Endothelial cell of umbilical vein (primary cell): ENCODE measurements at regions of chr5 and their contacts with region 1.

Region 1: GRCh38 chr5:138575194-138576015 is at the start of gene HSPA9:
- DNase-seq: peak; percentile 100
- H3K4me3 ChIP-seq: peak within 1 kb of the TSS; percentile 89 to 100 (median 100)
- H3K27ac ChIP-seq: peak within 1 kb of the TSS; percentile 97
- H3K4me1 ChIP-seq: peaks cover 10% of the 10 kb centered on the region
- H3K27me3 ChIP-seq: no peaks in the 10 kb centered on the region
- CTCF ChIP-seq: no peak
- POLR2A ChIP-seq: peak; percentile 76
- total RNA-seq, gene HSPA9: 180 and 192 TPM in 2 replicates

Region 2: DNA sequence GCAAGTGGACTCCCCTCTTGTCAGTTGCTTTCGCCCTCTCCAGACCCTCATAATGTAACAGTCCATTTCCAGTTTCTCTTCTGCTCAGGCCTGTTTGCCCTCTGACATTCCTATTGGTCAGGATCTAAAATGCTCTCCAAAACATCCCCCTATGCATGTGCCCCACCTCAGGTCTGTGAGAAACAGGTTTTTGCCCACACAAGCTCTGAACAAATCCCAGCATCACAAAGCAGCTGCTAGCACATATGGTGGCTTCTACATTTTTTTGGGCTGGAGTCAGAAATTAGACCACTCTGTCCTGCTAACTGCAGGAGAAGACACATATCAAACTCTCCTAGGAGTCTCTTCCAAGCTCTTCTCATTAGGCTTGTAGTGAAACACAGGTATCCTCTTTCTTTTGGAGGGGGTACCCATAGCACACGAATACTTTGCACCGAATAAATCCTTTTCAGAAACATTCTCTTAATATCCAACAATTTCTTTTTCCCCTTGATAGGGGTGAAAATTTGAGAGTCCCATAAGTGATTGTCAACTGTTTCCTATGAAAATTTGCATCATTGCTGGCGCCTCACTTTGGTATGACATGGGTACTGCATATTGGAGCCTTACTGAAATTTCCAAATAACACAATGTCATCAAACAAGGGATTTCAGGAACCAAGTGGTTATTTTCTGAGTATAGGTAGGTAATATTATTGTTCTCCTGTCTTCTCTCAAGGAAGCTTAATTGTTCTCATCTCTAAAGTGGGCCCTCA is 19.1 kb after region 1 on chr5:
- CTCF ChIA-PET with region 1: interaction called, 19 read pairs
- POLR2A ChIA-PET with region 1: interaction called, 4 read pairs
- dilution Hi-C with region 1: no loop called
- intact Hi-C with region 1: no loop called
- DNase-seq: no peak
- H3K4me3 ChIP-seq: no peak overlapping the region
- H3K27ac ChIP-seq: no peak overlapping the region
- H3K4me1 ChIP-seq: no peaks in the 10 kb centered on the region
- H3K27me3 ChIP-seq: peaks cover 9 to 11% of the 10 kb centered on the region in 2 experiments
- CTCF ChIP-seq: peak; percentile 9 to 22
- POLR2A ChIP-seq: no peak

Region 3: DNA sequence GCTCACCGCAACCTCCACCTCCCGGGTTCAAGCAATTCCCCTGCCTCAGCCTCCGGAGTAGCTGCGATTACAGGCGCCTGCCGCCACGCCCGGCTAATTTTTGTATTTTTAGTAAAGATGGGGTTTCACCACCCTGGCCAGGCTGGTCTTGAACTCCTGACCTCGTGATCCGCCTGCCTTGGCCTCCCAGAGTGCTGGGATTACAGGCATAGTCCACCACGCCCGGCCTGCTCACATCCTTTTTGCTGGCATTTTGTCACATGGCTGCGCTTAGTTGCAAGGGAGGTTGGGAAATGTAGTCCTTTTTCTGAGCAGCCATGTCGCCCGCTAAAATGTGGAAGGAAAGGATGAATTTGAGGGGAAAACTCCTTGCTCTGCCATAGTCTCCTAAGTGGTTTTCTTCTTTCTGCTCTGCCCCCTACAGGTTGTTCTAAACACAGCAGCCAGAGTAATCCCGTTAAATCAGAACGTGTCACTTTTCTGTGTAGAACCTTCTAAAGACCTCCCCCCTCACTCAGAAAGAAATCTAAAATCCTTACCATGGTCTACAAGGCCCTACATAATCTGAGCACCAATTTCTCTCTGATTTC is 57.6 kb after region 1 on chr5:
- CTCF ChIA-PET with region 1: interaction called, 17 read pairs
- POLR2A ChIA-PET with region 1: no interaction called
- dilution Hi-C with region 1: no loop called
- intact Hi-C with region 1: loop called (anchors 1 kb)
- DNase-seq: peak; percentile 92
- H3K4me3 ChIP-seq: no peak overlapping the region
- H3K27ac ChIP-seq: no peak overlapping the region
- H3K4me1 ChIP-seq: no peaks in the 10 kb centered on the region
- H3K27me3 ChIP-seq: peaks cover 0 to 3% of the 10 kb centered on the region in 2 experiments
- CTCF ChIP-seq: peak; percentile 52 to 59
- POLR2A ChIP-seq: no peak

Region 4: GRCh38 chr5:138676556-138677193 is 101.3 kb after region 1 on chr5:
- CTCF ChIA-PET with region 1: no interaction called
- POLR2A ChIA-PET with region 1: no interaction called
- dilution Hi-C with region 1: no loop called
- intact Hi-C with region 1: no loop called
- DNase-seq: no peak
- H3K4me3 ChIP-seq: no peak overlapping the region
- H3K27ac ChIP-seq: no peak overlapping the region
- H3K4me1 ChIP-seq: no peaks in the 10 kb centered on the region
- H3K27me3 ChIP-seq: peaks cover 0 to 1% of the 10 kb centered on the region in 2 experiments
- CTCF ChIP-seq: no peak
- POLR2A ChIP-seq: no peak

Region 5: GRCh38 chr5:138725138-138725833 is 149.9 kb after region 1 on chr5:
- CTCF ChIA-PET with region 1: interaction called, 10 read pairs
- POLR2A ChIA-PET with region 1: interaction called, 5 read pairs
- dilution Hi-C with region 1: no loop called
- intact Hi-C with region 1: no loop called
- DNase-seq: peak; percentile 42
- H3K4me3 ChIP-seq: no peak overlapping the region
- H3K27ac ChIP-seq: no peak overlapping the region
- H3K4me1 ChIP-seq: no peaks in the 10 kb centered on the region
- H3K27me3 ChIP-seq: peaks cover 5% of the 10 kb centered on the region in 2 experiments
- CTCF ChIP-seq: peak in 1 of 2 donors; percentile 40
- POLR2A ChIP-seq: no peak

Region 6: GRCh38 chr5:139197710-139198669 is 622.6 kb after region 1 on chr5 and contains the start of gene SIL1:
- CTCF ChIA-PET with region 1: interaction called, 4 read pairs
- POLR2A ChIA-PET with region 1: no interaction called
- dilution Hi-C with region 1: no loop called
- intact Hi-C with region 1: loop called (anchors 5 kb)
- DNase-seq: peak; percentile 98
- H3K4me3 ChIP-seq: peak within 1 kb of the TSS; percentile 63 to 98 (median 95)
- H3K27ac ChIP-seq: peak within 1 kb of the TSS; percentile 98
- H3K4me1 ChIP-seq: peaks cover 10% of the 10 kb centered on the region
- H3K27me3 ChIP-seq: no peaks in the 10 kb centered on the region
- CTCF ChIP-seq: no peak
- POLR2A ChIP-seq: peak; percentile 98
- total RNA-seq, gene SIL1: 35.4 and 47.6 TPM in 2 replicates

Region 7: DNA sequence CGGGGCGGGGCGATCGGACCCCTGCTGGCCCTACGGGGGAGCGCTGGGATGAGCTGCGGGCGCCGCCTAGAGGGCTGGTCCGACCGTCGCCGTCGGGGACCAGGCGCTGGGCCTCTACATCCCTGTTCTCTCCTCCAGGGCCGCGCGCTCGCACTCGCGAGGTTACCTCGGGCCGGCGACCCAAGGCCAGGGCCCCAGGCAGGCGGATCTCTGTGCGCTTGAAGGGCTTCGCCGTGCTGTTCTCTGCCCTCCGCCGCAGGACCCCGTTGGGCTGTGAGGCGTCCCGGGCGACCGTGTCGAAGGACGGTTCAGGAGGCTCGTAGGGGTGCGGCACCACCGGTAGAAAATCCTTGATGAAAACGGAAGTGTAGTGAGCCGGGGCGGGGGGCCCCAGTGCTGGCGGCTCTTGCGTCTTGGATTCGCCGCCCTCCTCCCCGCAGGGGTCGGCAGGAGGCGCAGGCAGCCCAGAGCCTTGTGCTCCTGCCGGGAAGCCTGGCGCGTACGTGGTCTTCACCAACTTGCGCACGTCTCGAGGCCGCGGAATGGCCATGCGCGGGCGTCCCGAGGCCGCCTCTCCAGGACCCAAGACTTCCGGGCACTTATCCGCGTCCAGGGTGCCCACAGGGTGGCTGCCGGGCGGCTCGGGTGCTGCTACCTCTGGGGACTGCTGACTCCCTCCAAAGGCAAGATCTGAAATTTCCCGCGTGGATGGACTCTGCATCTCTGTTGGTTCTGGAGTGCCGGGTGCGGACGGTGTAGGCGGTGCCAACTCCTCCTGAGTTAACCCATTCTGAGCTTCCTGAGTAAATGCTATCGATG is 817.5 kb after region 1 on chr5:
- CTCF ChIA-PET with region 1: interaction called, 3 read pairs
- POLR2A ChIA-PET with region 1: no interaction called
- dilution Hi-C with region 1: no loop called
- intact Hi-C with region 1: loop called (anchors 2 kb)
- DNase-seq: peak; percentile 57
- H3K4me3 ChIP-seq: peak overlapping the region in 2 of 3 experiments; percentile 1 to 15
- H3K27ac ChIP-seq: no peak overlapping the region
- H3K4me1 ChIP-seq: peaks cover 12% of the 10 kb centered on the region
- H3K27me3 ChIP-seq: peaks cover 7 to 14% of the 10 kb centered on the region in 2 experiments
- CTCF ChIP-seq: peak; percentile 75 to 97
- POLR2A ChIP-seq: no peak